CD8-positive, alpha-beta T cell (primary cell): ENCODE measurements at regions of chr10 and their contacts with region 1.

Region 1: GRCh38 chr10:63166742-63167258 is 33.7 kb downstream of the NRBF2 start:
- DNase-seq: peak in 3 of 9 experiments; percentile 17 to 79 (median 71)
- ATAC-seq: peak; percentile 75
- H3K4me3 ChIP-seq: no peak overlapping the region
- H3K4me3 Mint-ChIP-seq: no peak overlapping the region
- H3K27ac ChIP-seq: no peak overlapping the region
- H3K27ac Mint-ChIP-seq: no peak overlapping the region
- H3K4me1 ChIP-seq: no peaks in the 10 kb centered on the region
- H3K4me1 Mint-ChIP-seq: peaks cover 2% of the 10 kb centered on the region
- H3K27me3 ChIP-seq: no peaks in the 10 kb centered on the region
- H3K27me3 Mint-ChIP-seq: no peaks in the 10 kb centered on the region
- CTCF ChIP-seq: peak; percentile 83

Region 2: GRCh38 chr10:63767138-63767801 is 600.5 kb after region 1 on chr10:
- CTCF ChIA-PET with region 1: interaction called, 3 read pairs
- POLR2A ChIA-PET with region 1: no interaction called
- intact Hi-C with region 1: loop called in 1 of 2 experiments (anchors 1 kb)
- DNase-seq: no peak
- ATAC-seq: no peak
- H3K4me3 ChIP-seq: no peak overlapping the region
- H3K4me3 Mint-ChIP-seq: no peak overlapping the region
- H3K27ac ChIP-seq: no peak overlapping the region
- H3K27ac Mint-ChIP-seq: no peak overlapping the region
- H3K4me1 ChIP-seq: no peaks in the 10 kb centered on the region
- H3K4me1 Mint-ChIP-seq: no peaks in the 10 kb centered on the region
- H3K27me3 ChIP-seq: no peaks in the 10 kb centered on the region
- H3K27me3 Mint-ChIP-seq: no peaks in the 10 kb centered on the region
- CTCF ChIP-seq: no peak

Region 3: DNA sequence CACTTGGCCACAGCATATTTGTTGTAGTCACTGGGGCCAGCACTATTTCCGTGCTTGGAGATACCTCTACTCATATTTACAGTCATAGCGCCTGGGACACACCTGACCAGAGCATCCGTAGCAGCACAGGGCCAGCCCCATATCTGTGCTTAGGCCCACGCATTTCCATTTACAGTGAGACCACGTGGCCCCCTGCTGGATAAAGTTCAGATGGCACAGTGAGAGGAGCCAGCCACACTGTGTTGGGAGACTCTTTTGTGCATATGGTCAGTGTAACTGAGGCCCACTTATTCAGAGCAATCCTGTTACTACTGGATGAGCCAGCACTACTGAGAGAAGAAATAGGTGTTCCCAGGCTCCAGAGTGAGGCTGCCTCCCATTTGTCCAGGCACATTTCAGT is 809.7 kb after region 1 on chr10:
- CTCF ChIA-PET with region 1: no interaction called
- POLR2A ChIA-PET with region 1: no interaction called
- intact Hi-C with region 1: loop called in 1 of 2 experiments (anchors 5 kb)
- DNase-seq: peak in 2 of 9 experiments; percentile 5 to 7
- ATAC-seq: no peak
- H3K4me3 ChIP-seq: no peak overlapping the region
- H3K4me3 Mint-ChIP-seq: no peak overlapping the region
- H3K27ac ChIP-seq: no peak overlapping the region
- H3K27ac Mint-ChIP-seq: no peak overlapping the region
- H3K4me1 ChIP-seq: no peaks in the 10 kb centered on the region
- H3K4me1 Mint-ChIP-seq: no peaks in the 10 kb centered on the region
- H3K27me3 ChIP-seq: no peaks in the 10 kb centered on the region
- H3K27me3 Mint-ChIP-seq: peaks cover 2% of the 10 kb centered on the region
- CTCF ChIP-seq: peak; percentile 13